Activated CD8-positive, alpha-beta T cell treated with anti-CD3 and anti-CD28 coated beads, Interleukin-2, amount 10 ng/mL, durations not matched to agents 7 days and 5 days (primary cell): ENCODE measurements at regions of chr12 and their contacts with region 1.

Region 1: GRCh38 chr12:132414634-132415326 is 75.2 kb upstream of the FBRSL1 start:
- DNase-seq: peak; percentile 86
- ATAC-seq: peak; percentile 95
- H3K4me3 Mint-ChIP-seq: no peak overlapping the region
- H3K27ac Mint-ChIP-seq: no peak overlapping the region
- H3K4me1 Mint-ChIP-seq: peaks cover 3% of the 10 kb centered on the region
- H3K27me3 Mint-ChIP-seq: peaks cover 3% of the 10 kb centered on the region

Region 2: DNA sequence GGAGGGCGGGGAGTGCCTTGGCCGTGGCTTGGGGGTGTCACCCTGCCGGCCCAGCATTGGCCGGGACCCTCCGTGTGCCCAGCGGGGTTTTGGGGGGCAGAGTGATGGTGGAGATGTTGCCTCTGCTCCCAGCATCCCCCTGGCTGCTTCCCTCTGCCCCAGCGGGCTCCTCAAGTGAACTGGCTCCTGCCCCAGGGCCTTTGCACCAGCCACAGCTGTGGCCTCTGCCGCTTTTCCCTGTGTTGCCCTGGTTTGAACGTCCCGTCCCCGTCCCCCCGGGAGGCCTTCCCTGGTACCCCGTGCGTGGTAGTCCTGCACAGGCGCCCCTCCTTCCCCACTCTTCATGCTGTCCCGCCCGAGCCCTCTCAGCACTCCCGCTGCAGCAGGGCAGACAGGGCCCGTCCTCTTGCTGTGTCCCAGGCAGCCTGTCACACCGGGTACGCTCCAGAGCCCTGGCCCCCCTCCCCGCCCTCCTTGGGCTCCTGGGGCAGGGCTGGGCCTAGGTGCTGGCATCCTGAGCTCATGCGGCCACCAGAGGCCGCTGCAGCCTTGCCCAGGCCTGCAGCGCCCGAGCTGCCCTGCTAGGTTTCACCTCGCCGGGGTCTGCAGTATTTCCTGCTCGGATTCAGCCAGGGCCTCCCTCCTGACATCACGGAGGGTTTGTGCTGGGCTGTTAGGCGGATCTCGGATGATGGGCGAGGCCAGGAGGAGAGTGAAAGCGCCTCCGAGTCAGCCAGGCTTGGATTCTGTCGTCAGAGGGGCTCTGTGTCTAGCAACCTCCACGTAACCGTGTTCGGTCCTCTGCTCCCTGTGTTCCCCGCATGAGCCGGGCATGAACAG is 261.1 kb before region 1 on chr12:
- CTCF ChIA-PET with region 1: interaction called, 17 read pairs
- POLR2A ChIA-PET with region 1: no interaction called
- DNase-seq: peak; percentile 83
- ATAC-seq: peak; percentile 90
- H3K4me3 Mint-ChIP-seq: no peak overlapping the region
- H3K27ac Mint-ChIP-seq: peak overlapping the region; percentile 49
- H3K4me1 Mint-ChIP-seq: peaks cover 2% of the 10 kb centered on the region
- H3K27me3 Mint-ChIP-seq: no peaks in the 10 kb centered on the region

Region 3: GRCh38 chr12:132285991-132286681 is 128.6 kb before region 1 on chr12:
- CTCF ChIA-PET with region 1: no interaction called
- POLR2A ChIA-PET with region 1: no interaction called
- DNase-seq: no peak
- ATAC-seq: no peak
- H3K4me3 Mint-ChIP-seq: no peak overlapping the region
- H3K27ac Mint-ChIP-seq: no peak overlapping the region
- H3K4me1 Mint-ChIP-seq: peaks cover 7% of the 10 kb centered on the region
- H3K27me3 Mint-ChIP-seq: peaks cover 18% of the 10 kb centered on the region

Region 4: DNA sequence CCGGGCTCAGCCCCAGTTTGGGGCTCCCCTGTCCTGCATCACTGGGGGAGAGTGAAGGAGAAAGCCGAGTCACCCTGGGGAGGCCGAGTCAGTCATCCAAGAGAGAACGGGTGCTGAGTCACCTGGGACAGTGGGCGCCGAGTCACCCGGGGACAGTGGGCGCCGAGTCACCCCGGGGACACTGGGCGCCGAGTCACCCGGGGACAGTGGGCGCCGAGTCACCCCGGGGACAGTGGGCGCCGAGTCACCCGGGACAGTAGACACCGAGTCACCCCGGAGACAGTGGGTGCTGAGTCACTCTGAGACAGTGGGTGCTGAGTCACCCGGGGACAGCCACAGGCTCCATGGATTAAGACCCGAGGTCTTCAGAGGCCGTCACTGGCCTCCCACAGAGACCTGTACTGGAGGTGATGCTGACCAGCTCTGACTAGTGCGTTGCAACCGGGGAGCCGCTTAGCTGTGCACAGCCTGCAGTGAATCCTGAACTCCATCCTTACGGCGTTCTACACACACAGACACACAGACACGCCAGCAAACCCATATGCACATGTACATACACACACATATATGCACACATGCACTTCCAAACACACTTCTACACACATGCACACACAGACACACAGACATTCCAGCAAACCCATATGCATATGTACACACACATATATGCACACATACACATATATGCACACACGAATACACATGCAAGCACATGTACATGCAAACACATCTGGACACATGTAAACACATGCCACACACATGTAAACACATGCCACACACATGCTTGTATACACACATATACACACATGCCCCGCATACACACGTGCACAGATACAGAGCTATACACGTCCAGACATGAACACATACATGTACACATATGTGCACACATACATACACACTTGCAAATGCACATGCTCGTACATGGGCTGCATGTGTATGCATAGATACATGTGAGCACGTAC is 20.5 kb before region 1 on chr12:
- CTCF ChIA-PET with region 1: no interaction called
- POLR2A ChIA-PET with region 1: no interaction called
- DNase-seq: no peak
- ATAC-seq: no peak
- H3K4me3 Mint-ChIP-seq: no peak overlapping the region
- H3K27ac Mint-ChIP-seq: no peak overlapping the region
- H3K4me1 Mint-ChIP-seq: no peaks in the 10 kb centered on the region
- H3K27me3 Mint-ChIP-seq: peaks cover 5% of the 10 kb centered on the region

Region 5: GRCh38 chr12:132429946-132430643 is 15.3 kb after region 1 on chr12:
- CTCF ChIA-PET with region 1: interaction called, 13 read pairs
- POLR2A ChIA-PET with region 1: no interaction called
- DNase-seq: peak; percentile 78
- ATAC-seq: peak; percentile 95
- H3K4me3 Mint-ChIP-seq: peak overlapping the region; percentile 8
- H3K27ac Mint-ChIP-seq: peak overlapping the region; percentile 15
- H3K4me1 Mint-ChIP-seq: peaks cover 26% of the 10 kb centered on the region
- H3K27me3 Mint-ChIP-seq: peaks cover 8% of the 10 kb centered on the region

Region 6: GRCh38 chr12:132523576-132524331 is 109.0 kb after region 1 on chr12:
- CTCF ChIA-PET with region 1: interaction called, 29 read pairs
- POLR2A ChIA-PET with region 1: interaction called, 3 read pairs
- DNase-seq: peak; percentile 83
- ATAC-seq: peak; percentile 78
- H3K4me3 Mint-ChIP-seq: no peak overlapping the region
- H3K27ac Mint-ChIP-seq: no peak overlapping the region
- H3K4me1 Mint-ChIP-seq: peaks cover 3% of the 10 kb centered on the region
- H3K27me3 Mint-ChIP-seq: no peaks in the 10 kb centered on the region

Region 7: DNA sequence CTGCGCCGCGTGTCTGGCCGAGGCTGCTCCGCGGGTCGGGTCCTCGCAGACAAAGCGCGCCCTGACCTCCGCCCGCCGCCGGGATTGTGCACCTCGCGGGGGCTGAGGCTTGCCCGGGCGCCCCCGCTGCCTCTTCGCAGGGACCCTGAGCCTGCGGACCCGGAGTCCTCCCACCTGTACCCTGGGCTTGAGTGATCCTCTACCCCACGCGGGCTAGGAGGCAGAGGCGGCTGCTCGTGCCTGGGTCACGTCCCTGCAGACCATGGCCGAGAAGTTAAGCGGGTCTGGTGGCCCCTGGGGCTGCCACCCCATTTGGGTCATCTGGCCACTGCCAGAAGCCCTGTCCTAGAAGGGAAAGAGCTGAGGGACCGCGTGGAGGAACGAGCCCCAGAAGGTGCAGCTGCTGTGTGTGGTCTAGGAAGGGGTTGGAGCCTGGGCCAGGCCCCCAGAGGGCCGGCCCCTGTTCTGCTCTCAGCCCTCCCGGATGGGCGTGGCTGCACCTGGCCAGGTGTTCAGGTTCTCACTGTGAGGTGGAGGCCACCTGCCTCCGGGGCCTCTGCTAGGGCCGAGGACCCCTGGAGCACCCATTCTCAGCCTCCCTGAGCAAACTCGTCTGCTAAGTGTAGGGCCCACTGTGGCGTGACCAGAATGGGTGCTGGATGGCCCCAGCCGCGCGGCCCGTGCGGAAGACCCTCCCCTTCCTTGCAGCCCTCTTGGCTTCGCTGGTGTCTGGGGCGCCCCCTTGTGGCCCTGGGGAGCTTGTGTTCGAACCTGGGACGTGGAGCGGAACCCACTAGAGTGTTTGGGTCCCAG is 146.0 kb after region 1 on chr12:
- CTCF ChIA-PET with region 1: interaction called, 17 read pairs
- POLR2A ChIA-PET with region 1: no interaction called
- DNase-seq: peak; percentile 78
- ATAC-seq: peak; percentile 38
- H3K4me3 Mint-ChIP-seq: peak overlapping the region; percentile 72
- H3K27ac Mint-ChIP-seq: no peak overlapping the region
- H3K4me1 Mint-ChIP-seq: peaks cover 18% of the 10 kb centered on the region
- H3K27me3 Mint-ChIP-seq: peaks cover 6% of the 10 kb centered on the region

Region 8: GRCh38 chr12:132614861-132615578 is 200.2 kb after region 1 on chr12:
- CTCF ChIA-PET with region 1: interaction called, 29 read pairs
- POLR2A ChIA-PET with region 1: no interaction called
- DNase-seq: peak; percentile 86
- ATAC-seq: peak; percentile 88
- H3K4me3 Mint-ChIP-seq: no peak overlapping the region
- H3K27ac Mint-ChIP-seq: no peak overlapping the region
- H3K4me1 Mint-ChIP-seq: peaks cover 7% of the 10 kb centered on the region
- H3K27me3 Mint-ChIP-seq: peaks cover 30% of the 10 kb centered on the region